Activated naive CD4-positive, alpha-beta T cell treated with anti-CD3 and anti-CD28 coated beads for 36 hours (primary cell): ENCODE measurements at regions of chr17 and their contacts with region 1.

Region 1: GRCh38 chr17:79970576-79971068 is 65.0 kb downstream of the TBC1D16 start:
- DNase-seq: peak; percentile 66
- H3K4me3 Mint-ChIP-seq: no peak overlapping the region
- H3K27ac Mint-ChIP-seq: no peak overlapping the region
- H3K4me1 Mint-ChIP-seq: no peaks in the 10 kb centered on the region
- H3K27me3 Mint-ChIP-seq: no peaks in the 10 kb centered on the region

Region 2: DNA sequence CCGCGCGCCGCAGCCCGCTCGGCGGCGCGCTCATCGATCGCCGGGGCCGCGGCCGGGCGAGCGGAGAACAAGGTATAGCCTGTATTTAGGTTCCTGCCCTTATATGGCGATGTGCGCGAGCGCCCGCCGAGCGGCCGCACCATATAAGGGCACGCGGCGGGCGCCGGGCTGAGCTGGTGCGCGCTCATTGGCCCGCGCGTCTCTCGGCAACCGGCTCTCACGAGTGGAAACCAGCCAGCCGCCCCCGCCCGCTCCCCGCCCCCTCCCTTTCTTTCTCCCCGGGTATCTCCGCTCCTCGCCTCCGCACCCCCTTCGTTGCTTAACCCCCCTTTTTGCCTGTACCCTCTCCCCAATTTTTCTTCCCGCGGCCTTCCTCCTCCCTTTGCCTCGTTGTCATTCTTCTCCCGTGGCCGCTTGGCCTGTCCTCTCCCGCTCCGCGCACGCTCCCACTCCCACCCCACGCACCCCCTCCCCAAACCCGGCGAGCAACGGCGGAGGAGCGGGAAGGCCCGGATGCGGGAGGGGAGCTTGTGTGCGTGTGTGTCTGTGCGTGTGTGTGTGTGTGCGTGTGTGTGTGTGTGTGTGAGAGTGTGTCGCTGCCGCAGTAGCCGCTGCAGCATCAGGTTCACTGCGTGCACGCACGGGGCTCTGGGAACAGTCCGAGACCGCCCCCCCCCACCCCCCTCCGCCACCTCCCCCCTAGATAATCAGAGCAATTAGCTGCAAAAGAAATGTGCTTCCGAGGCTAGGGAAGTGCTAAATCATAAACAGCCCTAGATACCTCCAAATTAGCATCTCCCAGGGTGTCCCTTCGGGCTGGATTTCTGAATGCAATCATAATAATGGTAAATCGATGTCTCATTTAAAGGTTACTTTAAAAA is 160.3 kb before region 1 on chr17:
- CTCF ChIA-PET with region 1: interaction called, 4 read pairs
- intact Hi-C with region 1: loop called (anchors 5 kb)
- DNase-seq: peak; percentile 85
- H3K4me3 Mint-ChIP-seq: peak overlapping the region; percentile 29
- H3K27ac Mint-ChIP-seq: no peak overlapping the region
- H3K4me1 Mint-ChIP-seq: peaks cover 31% of the 10 kb centered on the region
- H3K27me3 Mint-ChIP-seq: peaks cover 65% of the 10 kb centered on the region